B cell (primary cell): ENCODE measurements at regions of chr12 and their contacts with region 1.

Region 1: GRCh38 chr12:31682136-31682962 is 22.9 kb downstream of the ETFBKMT start:
- DNase-seq: peak; percentile 89
- ATAC-seq: peak; percentile 71
- H3K4me3 ChIP-seq: no peak overlapping the region
- H3K4me3 Mint-ChIP-seq: peak overlapping the region; percentile 69
- H3K27ac ChIP-seq: peak overlapping the region; percentile 50 to 73
- H3K27ac Mint-ChIP-seq: peak overlapping the region; percentile 93
- H3K4me1 ChIP-seq: peaks cover 19 to 30% of the 10 kb centered on the region in 2 donors
- H3K4me1 Mint-ChIP-seq: peaks cover 31% of the 10 kb centered on the region
- H3K27me3 ChIP-seq: no peaks in the 10 kb centered on the region
- H3K27me3 Mint-ChIP-seq: no peaks in the 10 kb centered on the region
- CTCF ChIP-seq: peak; percentile 88

Region 2: GRCh38 chr12:31728917-31729640 is 46.7 kb after region 1 on chr12 and contains the start of gene AMN1:
- CTCF ChIA-PET with region 1: interaction called, 6 read pairs
- POLR2A ChIA-PET with region 1: interaction called, 8 read pairs
- intact Hi-C with region 1: loop called (anchors 1 kb)
- DNase-seq: peak; percentile 100
- ATAC-seq: peak; percentile 87
- H3K4me3 ChIP-seq: peak within 1 kb of the TSS; percentile 74 to 99 (median 85)
- H3K4me3 Mint-ChIP-seq: peak within 1 kb of the TSS; percentile 98
- H3K27ac ChIP-seq: peak within 1 kb of the TSS; percentile 94 to 96
- H3K27ac Mint-ChIP-seq: peak within 1 kb of the TSS; percentile 98
- H3K4me1 ChIP-seq: peaks cover 38 to 41% of the 10 kb centered on the region in 2 donors
- H3K4me1 Mint-ChIP-seq: peaks cover 73% of the 10 kb centered on the region
- H3K27me3 ChIP-seq: no peaks in the 10 kb centered on the region
- H3K27me3 Mint-ChIP-seq: no peaks in the 10 kb centered on the region
- CTCF ChIP-seq: no peak
- total RNA-seq, gene AMN1: 30.4 and 32.6 TPM in 2 replicates

Region 3: GRCh38 chr12:31820832-31821231 is 138.5 kb after region 1 on chr12:
- CTCF ChIA-PET with region 1: no interaction called
- POLR2A ChIA-PET with region 1: no interaction called
- intact Hi-C with region 1: no loop called
- DNase-seq: no peak
- ATAC-seq: no peak
- H3K4me3 ChIP-seq: no peak overlapping the region
- H3K4me3 Mint-ChIP-seq: no peak overlapping the region
- H3K27ac ChIP-seq: no peak overlapping the region
- H3K27ac Mint-ChIP-seq: no peak overlapping the region
- H3K4me1 ChIP-seq: peaks cover 12 to 16% of the 10 kb centered on the region in 2 donors
- H3K4me1 Mint-ChIP-seq: peaks cover 39% of the 10 kb centered on the region
- H3K27me3 ChIP-seq: no peaks in the 10 kb centered on the region
- H3K27me3 Mint-ChIP-seq: no peaks in the 10 kb centered on the region
- CTCF ChIP-seq: no peak

Region 4: DNA sequence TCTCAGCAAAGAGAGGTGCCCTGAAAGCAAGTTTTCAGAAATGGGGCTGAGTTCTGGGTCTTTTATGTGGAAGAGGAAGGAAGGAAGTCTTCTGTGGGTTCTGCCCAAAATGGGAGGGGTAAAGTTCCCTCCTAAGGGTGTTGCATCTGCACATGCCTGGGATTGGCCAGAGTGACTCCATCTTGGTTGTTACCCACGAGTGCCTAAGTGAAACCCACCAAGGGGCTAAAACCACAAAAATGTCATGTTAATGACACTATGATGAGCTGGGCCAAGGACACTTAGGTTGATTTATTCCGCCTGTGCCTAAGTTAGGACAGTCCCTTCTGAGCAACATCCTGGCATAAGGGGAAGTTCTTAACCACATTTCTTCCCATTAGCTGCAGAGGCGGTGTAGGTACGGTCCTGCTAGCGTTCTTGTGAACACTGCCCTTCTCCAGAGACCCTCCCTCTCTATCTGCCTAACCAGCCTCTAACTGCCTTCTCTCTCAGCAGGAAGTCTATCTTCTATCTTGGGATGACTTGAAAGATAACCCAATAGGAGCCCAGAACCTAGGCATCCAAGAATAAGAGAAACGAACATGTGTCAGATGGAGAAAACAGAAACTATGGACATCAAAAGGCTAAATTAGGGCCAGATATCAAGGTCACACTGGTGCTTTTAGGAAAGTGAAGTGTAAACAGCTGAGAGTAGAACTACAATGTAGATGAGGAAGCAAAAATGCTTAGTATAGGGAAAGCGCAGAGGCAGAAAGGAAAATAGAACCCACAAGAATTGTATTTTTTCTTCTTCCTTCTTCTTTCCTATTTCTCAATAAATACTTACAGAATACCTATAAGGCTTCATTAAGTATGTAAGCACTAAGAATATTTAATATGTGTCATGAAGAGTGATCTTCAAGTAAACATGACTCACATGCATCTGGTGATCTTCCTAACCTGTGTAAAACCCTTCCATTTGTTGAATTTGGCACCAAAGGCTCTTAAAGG is 150.7 kb after region 1 on chr12:
- CTCF ChIA-PET with region 1: no interaction called
- POLR2A ChIA-PET with region 1: no interaction called
- intact Hi-C with region 1: loop called (anchors 10 kb)
- DNase-seq: peak; percentile 84
- ATAC-seq: peak; percentile 80
- H3K4me3 ChIP-seq: peak overlapping the region in 1 of 5 experiments; percentile 47
- H3K4me3 Mint-ChIP-seq: peak overlapping the region; percentile 82
- H3K27ac ChIP-seq: peak overlapping the region; percentile 65 to 78
- H3K27ac Mint-ChIP-seq: peak overlapping the region; percentile 96
- H3K4me1 ChIP-seq: peaks cover 58 to 70% of the 10 kb centered on the region in 2 donors
- H3K4me1 Mint-ChIP-seq: peaks cover 70% of the 10 kb centered on the region
- H3K27me3 ChIP-seq: no peaks in the 10 kb centered on the region
- H3K27me3 Mint-ChIP-seq: no peaks in the 10 kb centered on the region
- CTCF ChIP-seq: no peak

Region 5: GRCh38 chr12:31959161-31959700 is 276.9 kb after region 1 on chr12 and contains the start of gene RESF1:
- CTCF ChIA-PET with region 1: interaction called, 25 read pairs
- POLR2A ChIA-PET with region 1: interaction called, 9 read pairs
- intact Hi-C with region 1: loop called (anchors 1 kb)
- DNase-seq: peak; percentile 91
- ATAC-seq: peak; percentile 85
- H3K4me3 ChIP-seq: peak within 1 kb of the TSS; percentile 65 to 98 (median 70)
- H3K4me3 Mint-ChIP-seq: peak within 1 kb of the TSS; percentile 96
- H3K27ac ChIP-seq: peak within 1 kb of the TSS; percentile 79 to 82
- H3K27ac Mint-ChIP-seq: peak within 1 kb of the TSS; percentile 96
- H3K4me1 ChIP-seq: peaks cover 49 to 50% of the 10 kb centered on the region in 2 donors
- H3K4me1 Mint-ChIP-seq: peaks cover 68% of the 10 kb centered on the region
- H3K27me3 ChIP-seq: no peaks in the 10 kb centered on the region
- H3K27me3 Mint-ChIP-seq: no peaks in the 10 kb centered on the region
- CTCF ChIP-seq: no peak
- total RNA-seq, gene RESF1: 350 and 352 TPM in 2 replicates

Region 6: GRCh38 chr12:32139064-32139421 is 456.7 kb after region 1 on chr12:
- CTCF ChIA-PET with region 1: interaction called, 3 read pairs
- POLR2A ChIA-PET with region 1: no interaction called
- intact Hi-C with region 1: loop called (anchors 10 kb)
- DNase-seq: peak; percentile 89
- ATAC-seq: peak; percentile 84
- H3K4me3 ChIP-seq: peak overlapping the region; percentile 32 to 72 (median 55)
- H3K4me3 Mint-ChIP-seq: peak overlapping the region; percentile 95
- H3K27ac ChIP-seq: peak overlapping the region; percentile 95 to 97
- H3K27ac Mint-ChIP-seq: peak overlapping the region; percentile 99
- H3K4me1 ChIP-seq: peaks cover 31 to 39% of the 10 kb centered on the region in 2 donors
- H3K4me1 Mint-ChIP-seq: peaks cover 57% of the 10 kb centered on the region
- H3K27me3 ChIP-seq: no peaks in the 10 kb centered on the region
- H3K27me3 Mint-ChIP-seq: no peaks in the 10 kb centered on the region
- CTCF ChIP-seq: no peak